ENCODE measurements at regions of chr10 and their contacts with region 1.

Region 1: DNA sequence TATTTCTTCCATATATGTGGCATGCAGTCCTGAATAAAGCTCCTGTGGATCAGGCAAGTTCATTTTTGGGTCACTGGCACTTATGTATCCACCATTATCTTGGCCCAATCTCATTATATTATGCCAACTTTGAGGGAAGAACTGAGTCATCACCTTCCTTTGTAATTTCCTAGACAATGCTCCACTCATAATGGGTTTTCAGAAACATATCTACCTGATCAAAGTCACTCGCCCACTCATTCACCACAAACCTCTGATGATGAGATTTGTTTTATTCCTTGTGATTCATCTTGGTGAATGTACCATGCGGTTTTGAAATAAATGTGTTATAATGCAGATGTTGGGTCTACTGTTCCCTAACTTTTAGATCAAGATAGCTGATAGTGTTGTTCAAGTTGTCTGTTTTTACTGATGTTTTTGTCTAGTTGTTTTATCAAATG is 525.8 kb downstream of the KIF20B start:
- DNase-seq: peak; percentile 96
- H3K4me3 Mint-ChIP-seq: no peak overlapping the region
- H3K27ac Mint-ChIP-seq: peak overlapping the region; percentile 49
- H3K4me1 Mint-ChIP-seq: peaks cover 42% of the 10 kb centered on the region
- H3K27me3 Mint-ChIP-seq: no peaks in the 10 kb centered on the region
- CTCF ChIP-seq: no peak

Region 2: GRCh38 chr10:90193240-90193985 is 33.8 kb before region 1 on chr10:
- CTCF ChIA-PET with region 1: no interaction called
- POLR2A ChIA-PET with region 1: interaction called, 21 read pairs
- intact Hi-C with region 1: no loop called
- DNase-seq: no peak
- H3K4me3 Mint-ChIP-seq: no peak overlapping the region
- H3K27ac Mint-ChIP-seq: peak overlapping the region; percentile 29
- H3K4me1 Mint-ChIP-seq: peaks cover 47% of the 10 kb centered on the region
- H3K27me3 Mint-ChIP-seq: no peaks in the 10 kb centered on the region
- CTCF ChIP-seq: no peak

Region 3: GRCh38 chr10:90204956-90205314 is 22.3 kb before region 1 on chr10:
- CTCF ChIA-PET with region 1: interaction called, 4 read pairs
- POLR2A ChIA-PET with region 1: interaction called, 21 read pairs
- intact Hi-C with region 1: no loop called
- DNase-seq: peak; percentile 85
- H3K4me3 Mint-ChIP-seq: no peak overlapping the region
- H3K27ac Mint-ChIP-seq: peak overlapping the region; percentile 4
- H3K4me1 Mint-ChIP-seq: peaks cover 15% of the 10 kb centered on the region
- H3K27me3 Mint-ChIP-seq: no peaks in the 10 kb centered on the region
- CTCF ChIP-seq: no peak

Region 4: DNA sequence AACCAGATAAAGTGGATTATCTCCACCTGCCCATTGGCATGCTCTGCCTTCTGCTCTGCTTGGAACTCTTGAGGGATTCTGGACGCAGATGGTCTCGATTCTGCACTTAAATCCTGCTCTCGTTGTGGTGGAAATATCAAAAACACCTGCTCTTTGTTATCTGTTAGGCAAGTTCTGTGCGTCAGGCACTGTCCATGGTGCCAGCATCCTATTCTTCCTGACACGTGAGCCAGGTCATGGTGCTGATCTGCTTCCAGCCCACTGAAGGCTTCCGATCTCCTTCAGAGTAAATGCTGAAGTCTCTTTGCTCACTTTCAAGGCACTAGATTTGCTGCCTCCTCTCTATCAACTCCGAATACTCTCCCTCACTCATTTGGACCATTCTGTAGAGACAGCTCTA is 125.1 kb after region 1 on chr10:
- CTCF ChIA-PET with region 1: no interaction called
- POLR2A ChIA-PET with region 1: no interaction called
- intact Hi-C with region 1: no loop called
- DNase-seq: peak; percentile 19
- H3K4me3 Mint-ChIP-seq: no peak overlapping the region
- H3K27ac Mint-ChIP-seq: no peak overlapping the region
- H3K4me1 Mint-ChIP-seq: no peaks in the 10 kb centered on the region
- H3K27me3 Mint-ChIP-seq: no peaks in the 10 kb centered on the region
- CTCF ChIP-seq: no peak

Region 5: DNA sequence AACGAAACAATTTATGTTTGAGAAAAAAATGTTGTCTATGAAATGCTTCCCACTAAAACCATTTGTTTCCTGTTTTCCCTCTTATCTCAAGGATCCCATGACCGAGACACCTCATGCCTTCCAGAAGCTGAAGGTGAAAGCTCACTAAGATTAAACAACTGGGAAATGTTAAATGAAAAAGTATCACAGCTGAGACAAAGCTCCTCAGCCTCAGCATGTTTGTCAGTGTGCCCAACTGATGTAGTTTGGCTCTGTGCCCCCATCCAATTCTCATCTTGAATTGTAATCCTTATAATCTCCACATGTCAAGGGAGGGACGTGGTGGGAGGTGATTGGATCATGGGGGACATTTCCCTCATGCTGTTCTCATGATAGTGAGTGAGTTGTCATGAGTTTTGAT is 303.3 kb after region 1 on chr10:
- CTCF ChIA-PET with region 1: no interaction called
- POLR2A ChIA-PET with region 1: no interaction called
- intact Hi-C with region 1: no loop called
- DNase-seq: no peak
- H3K4me3 Mint-ChIP-seq: no peak overlapping the region
- H3K27ac Mint-ChIP-seq: no peak overlapping the region
- H3K4me1 Mint-ChIP-seq: no peaks in the 10 kb centered on the region
- H3K27me3 Mint-ChIP-seq: no peaks in the 10 kb centered on the region
- CTCF ChIP-seq: no peak

Measured in MCF 10A (cell line).